ENCODE measurements at regions of chr3 and their contacts with region 1.

Region 1: GRCh38 chr3:134373994-134374790 is at the start of gene AMOTL2:
- DNase-seq: peak; percentile 87 to 92
- H3K4me3 ChIP-seq: peak within 1 kb of the TSS; percentile 68 to 96 (median 88)
- H3K27ac ChIP-seq: peak within 1 kb of the TSS; percentile 99
- H3K4me1 ChIP-seq: peaks cover 20 to 44% (median 33%) of the 10 kb centered on the region in 4 experiments
- H3K27me3 ChIP-seq: peaks cover 7 to 32% (median 24%) of the 10 kb centered on the region in 4 experiments
- CTCF ChIP-seq: 0 out of 4 replicates have a peak, but pooled peaks of 1 of the 3 experiments have one; percentile 1
- EP300 ChIP-seq: peak in 1 of 2 experiments; percentile 94; a peak in 1 of 3 replicates
- POLR2A ChIP-seq: peak in 1 of 2 experiments; percentile 100; a peak in 2 of 3 replicates
- RAD21 ChIP-seq: no peak; a peak in 1 of 4 replicates
- total RNA-seq, gene AMOTL2: 60.3 and 63.7 TPM in 2 replicates

Region 2: DNA sequence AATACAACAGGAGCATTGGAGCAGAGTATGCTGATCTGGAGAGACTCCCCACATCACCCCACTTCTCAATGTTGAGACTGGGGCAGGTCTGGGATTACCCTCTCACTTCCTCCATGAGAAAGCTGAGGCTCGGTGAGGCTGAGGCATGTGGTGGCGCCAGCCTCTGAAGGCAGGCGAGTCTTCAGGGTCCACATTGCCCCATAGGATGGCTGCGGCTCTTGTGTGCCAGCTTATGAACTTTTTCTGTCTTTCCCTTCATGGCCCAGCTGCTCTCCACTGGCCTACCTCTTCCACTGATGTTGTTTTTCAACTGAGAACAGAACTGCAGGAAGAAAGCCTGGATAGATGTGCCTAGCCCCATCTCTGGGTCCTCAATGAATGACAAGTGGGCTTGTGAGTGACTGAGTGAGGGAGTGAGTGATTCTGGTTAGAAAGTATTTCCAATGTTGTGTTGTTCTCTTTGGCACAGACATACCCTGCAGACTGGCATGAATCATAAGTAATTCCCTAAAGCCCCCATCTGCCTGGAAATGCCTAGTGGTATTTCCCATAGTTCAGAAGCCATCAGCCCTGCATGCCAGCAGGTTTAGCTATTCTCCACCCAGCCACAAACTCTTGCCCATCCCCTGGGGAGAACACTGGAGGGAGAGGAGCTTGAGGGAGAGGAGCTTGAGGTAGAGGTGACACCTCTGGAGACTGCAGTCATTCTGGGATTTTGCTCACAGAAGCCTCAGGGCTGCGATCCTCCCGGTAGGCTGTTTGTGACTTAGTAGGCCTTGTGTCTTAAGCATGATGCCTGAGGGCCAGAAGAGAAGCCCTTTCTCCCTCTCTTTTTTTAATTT is 56.9 kb before region 1 on chr3:
- CTCF ChIA-PET with region 1: interaction called, 13 read pairs
- POLR2A ChIA-PET with region 1: interaction called, 804 read pairs
- DNase-seq: peak in 1 of 2 experiments; percentile 39
- H3K4me3 ChIP-seq: no peak overlapping the region
- H3K27ac ChIP-seq: no peak overlapping the region
- H3K4me1 ChIP-seq: peaks cover 10 to 28% (median 18%) of the 10 kb centered on the region in 4 experiments
- H3K27me3 ChIP-seq: peaks cover 6 to 25% (median 18%) of the 10 kb centered on the region in 4 experiments
- CTCF ChIP-seq: no peak
- EP300 ChIP-seq: no peak
- POLR2A ChIP-seq: no peak
- RAD21 ChIP-seq: no peak

Region 3: DNA sequence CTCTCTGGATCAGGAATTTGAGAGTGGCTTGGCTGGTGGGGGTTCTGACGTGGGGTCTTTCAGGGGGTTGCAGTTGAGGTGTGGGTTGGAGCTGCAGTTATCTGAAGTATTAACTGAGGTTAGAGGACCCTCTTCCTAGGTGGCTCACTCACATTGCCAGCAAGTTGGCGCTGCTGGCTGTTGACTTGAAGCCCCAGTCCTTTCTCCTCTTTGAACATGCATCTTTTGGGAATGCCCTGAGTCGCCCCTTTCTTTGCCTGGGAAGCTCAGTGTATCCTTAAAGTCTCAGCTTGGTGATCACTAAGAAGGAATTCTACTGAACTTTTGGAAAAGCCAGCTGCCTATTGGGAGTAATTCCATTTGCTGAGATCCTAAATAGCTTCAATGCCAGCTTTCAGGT is 13.1 kb after region 1 on chr3:
- CTCF ChIA-PET with region 1: interaction called, 10 read pairs
- POLR2A ChIA-PET with region 1: interaction called, 35 read pairs
- DNase-seq: no peak
- H3K4me3 ChIP-seq: no peak overlapping the region
- H3K27ac ChIP-seq: no peak overlapping the region
- H3K4me1 ChIP-seq: peaks cover 0 to 6% (median 0%) of the 10 kb centered on the region in 4 experiments; a peak in 2 of 7 replicates
- H3K27me3 ChIP-seq: 0 out of 7 replicates have a peak, but pooled peaks cover 0 to under 1% (median 0%) of the 10 kb centered on the region in 4 experiments
- CTCF ChIP-seq: no peak
- EP300 ChIP-seq: no peak
- POLR2A ChIP-seq: no peak
- RAD21 ChIP-seq: no peak

Region 4: GRCh38 chr3:134392336-134392983 is 18.3 kb after region 1 on chr3:
- CTCF ChIA-PET with region 1: interaction called, 10 read pairs
- POLR2A ChIA-PET with region 1: interaction called, 11 read pairs
- DNase-seq: no peak
- H3K4me3 ChIP-seq: no peak overlapping the region
- H3K27ac ChIP-seq: no peak overlapping the region
- H3K4me1 ChIP-seq: peaks cover 0 to 5% (median 0%) of the 10 kb centered on the region in 4 experiments; a peak in 1 of 7 replicates
- H3K27me3 ChIP-seq: no peaks in the 10 kb centered on the region; a peak in 1 of 7 replicates
- CTCF ChIP-seq: no peak
- EP300 ChIP-seq: no peak
- POLR2A ChIP-seq: no peak
- RAD21 ChIP-seq: no peak

Region 5: GRCh38 chr3:134406331-134407238 is 32.4 kb after region 1 on chr3:
- CTCF ChIA-PET with region 1: interaction called, 6 read pairs
- POLR2A ChIA-PET with region 1: interaction called, 14 read pairs
- DNase-seq: peak; percentile 50 to 83
- H3K4me3 ChIP-seq: peak overlapping the region; percentile 37 to 63 (median 50)
- H3K27ac ChIP-seq: no peak overlapping the region
- H3K4me1 ChIP-seq: peaks cover 9 to 20% (median 17%) of the 10 kb centered on the region in 4 experiments
- H3K27me3 ChIP-seq: peaks cover 29 to 50% (median 45%) of the 10 kb centered on the region in 4 experiments
- CTCF ChIP-seq: no peak
- EP300 ChIP-seq: 0 out of 3 replicates have a peak, but pooled peaks of 1 of the 2 experiments have one; percentile 36
- POLR2A ChIP-seq: no peak; a peak in 1 of 3 replicates
- RAD21 ChIP-seq: peak in 1 of 2 experiments; percentile 6; a peak in 1 of 4 replicates

Region 6: DNA sequence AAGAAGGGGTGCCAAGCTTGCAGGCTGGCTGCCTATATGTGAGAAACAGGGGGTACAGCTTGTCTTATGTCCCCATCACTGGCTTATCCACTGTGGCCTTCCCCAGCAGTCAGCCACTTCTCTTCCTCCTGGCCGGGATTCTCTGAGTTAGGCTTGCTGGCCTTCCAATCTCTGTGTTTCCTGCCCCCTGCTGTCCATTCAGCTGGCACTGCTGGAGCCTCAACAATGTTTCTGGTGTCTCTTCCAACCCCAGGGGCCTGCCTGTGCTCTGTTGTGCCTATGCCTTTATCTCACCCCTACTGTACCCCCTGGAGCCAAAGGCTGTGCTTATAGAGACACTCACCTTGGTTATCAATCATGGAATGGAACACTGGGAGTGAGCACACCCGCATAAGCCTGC is 75.1 kb after region 1 on chr3:
- CTCF ChIA-PET with region 1: interaction called, 26 read pairs
- POLR2A ChIA-PET with region 1: interaction called, 94 read pairs
- DNase-seq: peak in 1 of 2 experiments; percentile 59
- H3K4me3 ChIP-seq: no peak overlapping the region
- H3K27ac ChIP-seq: no peak overlapping the region
- H3K4me1 ChIP-seq: peaks cover 0 to 3% (median 2%) of the 10 kb centered on the region in 4 experiments; a peak in 4 of 7 replicates
- H3K27me3 ChIP-seq: peaks cover 0 to 4% (median 0%) of the 10 kb centered on the region in 4 experiments; a peak in 2 of 7 replicates
- CTCF ChIP-seq: peak; percentile 45 to 73 (median 59)
- EP300 ChIP-seq: no peak
- POLR2A ChIP-seq: no peak
- RAD21 ChIP-seq: peak; percentile 62 to 75

Region 7: GRCh38 chr3:134464064-134464697 is 90.0 kb after region 1 on chr3:
- CTCF ChIA-PET with region 1: interaction called, 10 read pairs
- POLR2A ChIA-PET with region 1: interaction called, 8 read pairs
- DNase-seq: peak; percentile 73 to 79
- H3K4me3 ChIP-seq: peak overlapping the region in 1 of 4 experiments; percentile 39; a peak in 5 of 8 replicates
- H3K27ac ChIP-seq: peak overlapping the region; percentile 71
- H3K4me1 ChIP-seq: peaks cover 5 to 16% (median 8%) of the 10 kb centered on the region in 4 experiments
- H3K27me3 ChIP-seq: no peaks in the 10 kb centered on the region
- CTCF ChIP-seq: no peak
- EP300 ChIP-seq: peak; percentile 56 to 97
- POLR2A ChIP-seq: peak; percentile 68 to 89
- RAD21 ChIP-seq: 0 out of 4 replicates have a peak, but pooled peaks of 1 of the 2 experiments have one; percentile 4

Region 8: GRCh38 chr3:134542287-134542958 is 168.2 kb after region 1 on chr3:
- CTCF ChIA-PET with region 1: no interaction called
- POLR2A ChIA-PET with region 1: no interaction called
- DNase-seq: no peak
- H3K4me3 ChIP-seq: no peak overlapping the region
- H3K27ac ChIP-seq: no peak overlapping the region
- H3K4me1 ChIP-seq: no peaks in the 10 kb centered on the region
- H3K27me3 ChIP-seq: no peaks in the 10 kb centered on the region
- CTCF ChIP-seq: no peak
- EP300 ChIP-seq: no peak
- POLR2A ChIP-seq: no peak
- RAD21 ChIP-seq: no peak

Region 9: DNA sequence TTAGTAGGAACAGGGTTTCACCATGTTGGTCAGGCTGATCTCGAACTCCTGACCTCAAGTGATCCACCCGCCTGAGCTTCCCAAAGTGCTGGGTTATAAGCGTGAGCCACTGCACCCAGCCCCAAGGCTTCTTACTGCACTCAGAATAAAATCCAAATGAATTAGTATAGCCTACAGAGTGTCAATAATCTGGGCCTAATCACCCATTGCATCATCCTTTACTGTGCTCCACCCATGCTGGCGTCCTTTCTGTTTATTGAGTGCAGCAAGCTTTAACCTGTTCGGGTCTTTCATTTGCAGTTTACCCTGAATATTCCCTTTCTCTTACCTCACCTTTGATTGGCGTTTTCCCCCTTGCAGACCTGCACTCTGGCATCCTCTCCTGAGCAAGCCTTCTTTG is 189.4 kb after region 1 on chr3:
- CTCF ChIA-PET with region 1: no interaction called
- POLR2A ChIA-PET with region 1: no interaction called
- DNase-seq: no peak
- H3K4me3 ChIP-seq: no peak overlapping the region
- H3K27ac ChIP-seq: no peak overlapping the region
- H3K4me1 ChIP-seq: no peaks in the 10 kb centered on the region
- H3K27me3 ChIP-seq: no peaks in the 10 kb centered on the region
- CTCF ChIP-seq: no peak
- EP300 ChIP-seq: no peak
- POLR2A ChIP-seq: no peak
- RAD21 ChIP-seq: no peak